ENCODE measurements at regions of chr10 and their contacts with region 1.

Region 1: DNA sequence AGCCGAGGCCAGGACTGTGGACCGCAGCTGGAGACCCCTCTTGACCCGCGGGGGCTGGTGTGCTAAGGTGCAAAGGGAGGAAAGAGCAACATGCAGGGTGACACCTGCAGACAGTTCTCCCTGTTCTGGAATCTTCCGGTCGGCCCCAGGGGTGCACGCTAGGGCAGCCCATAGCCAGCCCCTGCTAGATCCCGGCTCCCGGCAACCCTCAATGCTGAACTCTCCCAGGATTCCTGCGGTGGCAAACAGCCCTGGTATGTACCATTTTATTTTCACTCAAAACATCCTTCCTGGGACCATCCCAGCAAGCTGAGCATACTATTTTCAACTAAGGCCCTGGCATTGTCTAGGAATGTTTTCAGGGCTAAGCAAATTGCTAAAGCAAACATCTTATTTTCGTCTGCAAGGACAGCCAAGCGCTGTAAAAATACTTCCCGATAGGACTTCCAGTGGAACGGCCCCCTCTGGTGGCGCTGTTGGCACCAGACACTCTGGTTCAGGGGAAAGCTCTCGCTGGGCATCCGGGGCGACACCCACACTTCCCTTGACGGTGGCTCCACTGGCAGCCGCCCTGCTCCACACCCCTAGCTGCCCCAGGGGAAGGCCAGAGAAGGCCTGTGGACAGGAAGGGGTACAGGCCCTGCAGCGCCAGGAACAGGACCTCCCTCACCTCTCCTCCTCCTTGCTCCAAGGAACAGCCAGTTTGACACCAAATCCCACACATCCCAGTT is 99.4 kb downstream of the CTBP2 start:
- DNase-seq: peak; percentile 80
- H3K4me3 ChIP-seq: no peak overlapping the region
- H3K27ac ChIP-seq: peak overlapping the region; percentile 44
- H3K4me1 ChIP-seq: peaks cover 57% of the 10 kb centered on the region
- H3K27me3 ChIP-seq: no peaks in the 10 kb centered on the region
- CTCF ChIP-seq: peak; percentile 82 to 90
- POLR2A ChIP-seq: no peak

Region 2: GRCh38 chr10:125076891-125077541 is 16.0 kb after region 1 on chr10:
- CTCF ChIA-PET with region 1: interaction called, 15 read pairs
- POLR2A ChIA-PET with region 1: interaction called, 3 read pairs
- dilution Hi-C with region 1: no loop called
- intact Hi-C with region 1: loop called (anchors 1 kb)
- DNase-seq: peak; percentile 81
- H3K4me3 ChIP-seq: no peak overlapping the region
- H3K27ac ChIP-seq: peak overlapping the region; percentile 92
- H3K4me1 ChIP-seq: peaks cover 38% of the 10 kb centered on the region
- H3K27me3 ChIP-seq: no peaks in the 10 kb centered on the region
- CTCF ChIP-seq: no peak
- POLR2A ChIP-seq: no peak

Region 3: GRCh38 chr10:125084191-125084613 is 23.2 kb after region 1 on chr10:
- CTCF ChIA-PET with region 1: interaction called, 13 read pairs
- POLR2A ChIA-PET with region 1: no interaction called
- dilution Hi-C with region 1: no loop called
- intact Hi-C with region 1: loop called (anchors 1 kb)
- DNase-seq: peak; percentile 93
- H3K4me3 ChIP-seq: no peak overlapping the region
- H3K27ac ChIP-seq: peak overlapping the region; percentile 91
- H3K4me1 ChIP-seq: peaks cover 51% of the 10 kb centered on the region
- H3K27me3 ChIP-seq: no peaks in the 10 kb centered on the region
- CTCF ChIP-seq: peak; percentile 28 to 52
- POLR2A ChIP-seq: no peak

Region 4: GRCh38 chr10:125092564-125093031 is 31.6 kb after region 1 on chr10:
- CTCF ChIA-PET with region 1: interaction called, 10 read pairs
- POLR2A ChIA-PET with region 1: no interaction called
- dilution Hi-C with region 1: no loop called
- intact Hi-C with region 1: no loop called
- DNase-seq: no peak
- H3K4me3 ChIP-seq: no peak overlapping the region
- H3K27ac ChIP-seq: no peak overlapping the region
- H3K4me1 ChIP-seq: peaks cover 5% of the 10 kb centered on the region
- H3K27me3 ChIP-seq: no peaks in the 10 kb centered on the region
- CTCF ChIP-seq: no peak
- POLR2A ChIP-seq: no peak

Region 5: GRCh38 chr10:125296603-125297002 is 235.6 kb after region 1 on chr10:
- CTCF ChIA-PET with region 1: no interaction called
- POLR2A ChIA-PET with region 1: no interaction called
- dilution Hi-C with region 1: no loop called
- intact Hi-C with region 1: no loop called
- DNase-seq: no peak
- H3K4me3 ChIP-seq: no peak overlapping the region
- H3K27ac ChIP-seq: no peak overlapping the region
- H3K4me1 ChIP-seq: no peaks in the 10 kb centered on the region
- H3K27me3 ChIP-seq: no peaks in the 10 kb centered on the region
- CTCF ChIP-seq: no peak
- POLR2A ChIP-seq: no peak